ENCODE measurements at regions of chr1 and their contacts with region 1.

Region 1: DNA sequence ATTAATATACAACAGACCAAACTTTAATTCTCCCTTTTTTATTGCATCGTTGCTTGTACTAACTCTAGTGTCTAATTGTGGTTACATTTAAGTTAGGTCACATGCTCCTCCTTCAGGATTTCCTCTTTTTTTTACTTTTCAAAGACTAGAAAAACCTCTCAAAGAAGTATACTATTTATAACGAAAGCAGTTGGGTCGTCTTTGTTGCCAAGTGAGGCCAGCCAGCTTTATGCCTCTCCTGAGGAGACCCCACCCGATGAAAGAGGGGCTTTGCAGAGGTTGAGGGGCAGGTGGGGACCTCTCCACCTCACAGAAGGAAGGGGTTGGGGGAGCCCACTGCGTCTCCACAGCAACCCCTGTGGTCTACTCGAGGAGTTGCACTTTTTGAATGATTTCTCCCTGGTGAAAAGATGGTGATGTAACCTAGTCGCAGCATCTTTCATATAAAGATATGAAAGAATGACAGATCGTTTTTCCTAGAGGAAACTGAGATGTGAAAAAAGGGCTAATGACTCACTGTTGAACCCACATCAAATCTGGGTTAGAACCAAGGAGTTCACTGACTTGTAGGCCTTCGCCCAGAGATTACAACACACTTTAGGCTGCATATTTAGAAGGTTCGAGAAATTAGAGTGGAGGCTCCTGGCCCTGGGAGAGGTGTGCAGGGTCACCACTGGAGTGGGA is 6.4 kb downstream of the TGFB2 start:
- DNase-seq: peak in 1 of 2 experiments; percentile 48
- H3K4me3 ChIP-seq: no peak overlapping the region
- H3K27ac ChIP-seq: no peak overlapping the region
- H3K4me1 ChIP-seq: peaks cover 0 to 2% (median 0%) of the 10 kb centered on the region in 4 experiments; a peak in 1 of 7 replicates
- H3K27me3 ChIP-seq: peaks cover 0 to 3% (median 2%) of the 10 kb centered on the region in 4 experiments; a peak in 3 of 7 replicates
- CTCF ChIP-seq: peak; percentile 46 to 67 (median 52)
- EP300 ChIP-seq: no peak
- POLR2A ChIP-seq: no peak
- RAD21 ChIP-seq: peak; percentile 48 to 54

Region 2: GRCh38 chr1:218322762-218323161 is 28.8 kb before region 1 on chr1:
- CTCF ChIA-PET with region 1: no interaction called
- POLR2A ChIA-PET with region 1: no interaction called
- DNase-seq: no peak
- H3K4me3 ChIP-seq: no peak overlapping the region
- H3K27ac ChIP-seq: no peak overlapping the region
- H3K4me1 ChIP-seq: no peaks in the 10 kb centered on the region
- H3K27me3 ChIP-seq: no peaks in the 10 kb centered on the region
- CTCF ChIP-seq: no peak
- EP300 ChIP-seq: no peak
- POLR2A ChIP-seq: no peak
- RAD21 ChIP-seq: no peak

Region 3: GRCh38 chr1:218339267-218339831 is 12.2 kb before region 1 on chr1:
- CTCF ChIA-PET with region 1: interaction called, 10 read pairs
- POLR2A ChIA-PET with region 1: interaction called, 3 read pairs
- DNase-seq: no peak
- H3K4me3 ChIP-seq: no peak overlapping the region
- H3K27ac ChIP-seq: no peak overlapping the region
- H3K4me1 ChIP-seq: no peaks in the 10 kb centered on the region
- H3K27me3 ChIP-seq: no peaks in the 10 kb centered on the region; a peak in 3 of 7 replicates
- CTCF ChIP-seq: peak in 2 of 3 experiments; percentile 13 to 52; a peak in 2 of 4 replicates
- EP300 ChIP-seq: no peak
- POLR2A ChIP-seq: no peak
- RAD21 ChIP-seq: peak; percentile 44 to 62

Region 4: GRCh38 chr1:218365226-218365999 is 13.9 kb after region 1 on chr1:
- CTCF ChIA-PET with region 1: interaction called, 18 read pairs
- POLR2A ChIA-PET with region 1: no interaction called
- DNase-seq: no peak
- H3K4me3 ChIP-seq: no peak overlapping the region
- H3K27ac ChIP-seq: no peak overlapping the region; the same call in 1 of the 2 replicates
- H3K4me1 ChIP-seq: peaks cover 0 to 2% (median 0%) of the 10 kb centered on the region in 4 experiments; a peak in 1 of 7 replicates
- H3K27me3 ChIP-seq: no peaks in the 10 kb centered on the region
- CTCF ChIP-seq: no peak
- EP300 ChIP-seq: no peak
- POLR2A ChIP-seq: no peak
- RAD21 ChIP-seq: no peak